Natural killer cell (primary cell): ENCODE measurements at regions of chr14 and their contacts with region 1.

Region 1: DNA sequence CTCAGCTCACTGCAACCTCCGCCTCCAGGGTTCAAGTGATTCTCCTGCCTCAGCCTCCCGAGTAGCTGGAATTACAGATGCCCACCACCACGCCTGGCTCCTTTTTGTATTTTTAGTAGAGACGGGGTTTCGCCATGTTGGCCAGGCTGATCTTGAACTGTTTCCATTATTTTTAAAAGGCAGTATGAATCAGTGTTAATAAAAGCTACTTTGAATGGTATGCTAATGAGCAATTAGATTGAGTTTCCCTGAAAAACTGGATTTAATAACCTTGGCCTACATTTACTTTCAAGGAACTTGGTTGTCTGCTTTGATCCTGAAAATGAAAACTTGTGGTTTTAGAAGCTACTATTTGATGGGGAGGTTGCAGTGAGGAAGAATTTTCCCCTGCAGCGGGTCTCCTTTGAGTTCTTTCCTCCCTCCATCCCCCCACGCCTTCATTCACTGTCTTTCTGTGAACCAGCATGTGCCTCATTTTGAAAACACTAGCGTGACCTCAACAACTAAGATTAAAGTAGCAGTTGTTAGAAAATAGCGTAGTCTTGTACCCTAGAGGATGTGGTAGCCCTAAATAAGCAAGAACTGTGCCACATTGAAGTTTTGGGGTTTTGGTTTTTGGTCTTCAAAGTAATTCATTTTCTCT is 17.8 kb upstream of the RPS6KA5 start:
- DNase-seq: peak in 1 of 2 donors; percentile 82
- ATAC-seq: peak; percentile 80 to 96 (median 81)
- H3K4me3 ChIP-seq: no peak overlapping the region
- H3K4me3 Mint-ChIP-seq: peak overlapping the region; percentile 73
- H3K27ac ChIP-seq: peak overlapping the region; percentile 45
- H3K27ac Mint-ChIP-seq: peak overlapping the region; percentile 90 to 91
- H3K4me1 ChIP-seq: peaks cover 28% of the 10 kb centered on the region
- H3K4me1 Mint-ChIP-seq: peaks cover 33 to 35% of the 10 kb centered on the region in 2 donors
- H3K27me3 ChIP-seq: no peaks in the 10 kb centered on the region
- H3K27me3 Mint-ChIP-seq: no peaks in the 10 kb centered on the region
- CTCF ChIP-seq: no peak

Region 2: GRCh38 chr14:91048265-91048664 is 30.0 kb before region 1 on chr14:
- intact Hi-C with region 1: no loop called
- DNase-seq: no peak
- ATAC-seq: no peak
- H3K4me3 ChIP-seq: no peak overlapping the region
- H3K4me3 Mint-ChIP-seq: no peak overlapping the region
- H3K27ac ChIP-seq: no peak overlapping the region
- H3K27ac Mint-ChIP-seq: no peak overlapping the region
- H3K4me1 ChIP-seq: peaks cover 24% of the 10 kb centered on the region
- H3K4me1 Mint-ChIP-seq: peaks cover 26 to 38% of the 10 kb centered on the region in 2 donors
- H3K27me3 ChIP-seq: no peaks in the 10 kb centered on the region
- H3K27me3 Mint-ChIP-seq: peaks cover 6 to 8% of the 10 kb centered on the region in 2 donors
- CTCF ChIP-seq: no peak

Region 3: GRCh38 chr14:91114079-91115065 is 36.2 kb after region 1 on chr14:
- intact Hi-C with region 1: loop called (anchors 5 kb)
- DNase-seq: peak; percentile 57 to 86
- ATAC-seq: peak; percentile 77 to 85 (median 82)
- H3K4me3 ChIP-seq: peak overlapping the region; percentile 70
- H3K4me3 Mint-ChIP-seq: peak overlapping the region; percentile 91
- H3K27ac ChIP-seq: peak overlapping the region; percentile 94
- H3K27ac Mint-ChIP-seq: peak overlapping the region; percentile 96
- H3K4me1 ChIP-seq: peaks cover 49% of the 10 kb centered on the region
- H3K4me1 Mint-ChIP-seq: peaks cover 70 to 77% of the 10 kb centered on the region in 2 donors
- H3K27me3 ChIP-seq: no peaks in the 10 kb centered on the region
- H3K27me3 Mint-ChIP-seq: no peaks in the 10 kb centered on the region
- CTCF ChIP-seq: no peak